Posterior cingulate gyrus (tissue), 11 donors: ENCODE measurements at regions of chr2 and their contacts with region 1.

Region 1: DNA sequence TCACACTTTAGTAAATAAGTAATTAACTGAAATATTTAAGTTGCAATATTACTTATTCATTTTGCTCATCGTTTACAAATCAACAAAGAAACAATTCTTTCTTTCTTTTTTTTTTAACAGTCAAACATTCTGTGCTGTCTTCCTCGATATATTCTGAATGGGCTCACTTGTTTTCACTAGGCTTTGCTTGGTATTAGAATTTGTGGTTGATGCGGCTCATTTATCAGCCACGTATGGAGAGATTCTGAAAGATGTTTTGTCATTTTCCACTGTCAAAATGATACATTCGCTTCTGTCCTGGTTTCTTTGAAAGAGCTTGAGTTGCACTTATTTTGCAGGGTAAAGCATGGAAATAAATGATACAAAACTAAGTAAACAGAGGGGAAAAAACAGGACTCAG is 323.7 kb downstream of the LRRTM1 start:
- DNase-seq: no peak

Region 2: GRCh38 chr2:79935771-79936657 is 44.8 kb before region 1 on chr2:
- intact Hi-C with region 1: loop called (anchors 2 kb)
- DNase-seq: peak in 9 of 10 donors; percentile 34 to 95 (median 75)

Region 3: DNA sequence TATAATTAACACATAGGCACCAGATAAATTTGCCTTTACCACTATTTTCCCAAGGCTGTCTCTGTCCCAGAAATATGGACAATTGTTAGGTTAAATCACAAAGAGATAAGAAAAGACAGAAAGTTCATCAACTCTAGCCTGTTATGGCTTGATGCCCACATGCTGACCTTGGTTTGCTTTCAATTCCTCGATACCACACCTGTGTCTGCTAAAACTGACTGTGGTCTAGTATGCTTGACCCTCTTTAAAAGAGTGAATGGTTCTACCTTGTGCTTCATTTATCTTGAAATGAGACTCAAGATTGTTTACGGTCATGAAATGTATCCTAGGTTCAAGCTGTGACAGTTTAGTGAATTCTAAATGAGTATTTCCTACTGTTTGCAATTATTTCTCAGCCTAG is 1232.8 kb after region 1 on chr2:
- intact Hi-C with region 1: no loop called
- DNase-seq: no peak